ENCODE measurements at regions of chr6 and their contacts with region 1.

Region 1: GRCh38 chr6:46410334-46410953 is 80.8 kb downstream of the RCAN2 start:
- DNase-seq: peak; percentile 49
- H3K4me3 ChIP-seq: no peak overlapping the region
- H3K27ac ChIP-seq: no peak overlapping the region
- H3K4me1 ChIP-seq: no peaks in the 10 kb centered on the region
- H3K27me3 ChIP-seq: peaks cover 37% of the 10 kb centered on the region
- CTCF ChIP-seq: peak; percentile 78

Region 2: GRCh38 chr6:45930420-45931040 is 479.9 kb before region 1 on chr6:
- CTCF ChIA-PET with region 1: no interaction called
- POLR2A ChIA-PET with region 1: no interaction called
- intact Hi-C with region 1: loop called (anchors 2 kb)
- DNase-seq: peak; percentile 68
- H3K4me3 ChIP-seq: no peak overlapping the region
- H3K27ac ChIP-seq: no peak overlapping the region
- H3K4me1 ChIP-seq: no peaks in the 10 kb centered on the region
- H3K27me3 ChIP-seq: no peaks in the 10 kb centered on the region
- CTCF ChIP-seq: peak; percentile 99

Region 3: DNA sequence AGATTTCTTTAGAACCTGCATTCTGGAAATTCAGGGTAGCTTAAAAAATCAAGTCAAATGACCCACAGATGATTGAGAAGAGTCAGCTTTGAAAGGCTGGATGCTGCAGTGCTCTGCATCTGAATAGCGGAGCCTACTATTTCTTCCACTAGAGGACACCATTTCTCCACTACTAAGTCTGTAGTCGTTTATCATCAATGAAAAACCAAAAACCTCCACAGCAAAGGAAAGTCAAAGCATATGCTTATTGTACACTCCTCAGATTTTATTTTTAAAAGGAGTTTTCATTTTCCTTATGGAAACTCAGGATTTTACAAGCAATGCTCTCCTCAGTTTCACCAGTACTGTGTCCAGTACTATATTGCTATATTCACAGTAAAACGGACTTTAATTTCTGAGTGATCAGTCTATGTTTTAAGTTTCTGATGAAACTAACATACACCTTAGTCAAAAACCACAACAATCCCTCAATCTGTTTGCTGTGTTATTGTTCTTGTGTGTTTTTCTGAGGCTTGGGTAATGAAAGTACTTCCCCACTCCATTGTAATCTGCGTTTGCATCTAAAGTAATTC is 189.1 kb before region 1 on chr6:
- CTCF ChIA-PET with region 1: interaction called, 6 read pairs
- POLR2A ChIA-PET with region 1: no interaction called
- intact Hi-C with region 1: loop called (anchors 1 kb)
- DNase-seq: peak; percentile 52
- H3K4me3 ChIP-seq: no peak overlapping the region
- H3K27ac ChIP-seq: no peak overlapping the region
- H3K4me1 ChIP-seq: no peaks in the 10 kb centered on the region
- H3K27me3 ChIP-seq: peaks cover 7% of the 10 kb centered on the region
- CTCF ChIP-seq: peak; percentile 74

Region 4: GRCh38 chr6:46661483-46661882 is 251.0 kb after region 1 on chr6:
- CTCF ChIA-PET with region 1: no interaction called
- POLR2A ChIA-PET with region 1: no interaction called
- intact Hi-C with region 1: no loop called
- DNase-seq: no peak
- H3K4me3 ChIP-seq: no peak overlapping the region
- H3K27ac ChIP-seq: no peak overlapping the region
- H3K4me1 ChIP-seq: no peaks in the 10 kb centered on the region
- H3K27me3 ChIP-seq: peaks cover 11% of the 10 kb centered on the region
- CTCF ChIP-seq: no peak